HepG2 (cell line): ENCODE measurements at regions of chr2 and their contacts with region 1.

Region 1: GRCh38 chr2:68157402-68158133 is at the start of gene PNO1:
- DNase-seq: peak; percentile 95
- ATAC-seq: peak; percentile 97
- H3K4me3 ChIP-seq: peak within 1 kb of the TSS; percentile 82 to 91 (median 82)
- H3K27ac ChIP-seq: peak within 1 kb of the TSS; percentile 90
- H3K4me1 ChIP-seq: peaks cover 17% of the 10 kb centered on the region; the same call in 1 of the 2 replicates
- H3K27me3 ChIP-seq: no peaks in the 10 kb centered on the region; a peak in 1 of 5 replicates
- CTCF ChIP-seq: 0 out of 2 replicates have a peak, but pooled peaks have one; percentile 14
- EP300 ChIP-seq: peak in 1 of 2 experiments; percentile 83; a peak in 2 of 4 replicates
- POLR2A ChIP-seq: peak; percentile 71 to 84
- RAD21 ChIP-seq: no peak; the same call in 1 of the 2 replicates
- total RNA-seq, gene PNO1: 48.5 and 68.2 TPM in 2 replicates

Region 2: GRCh38 chr2:68062680-68063387 is 94.7 kb before region 1 on chr2 and contains the start of gene C1D:
- CTCF ChIA-PET with region 1: no interaction called
- POLR2A ChIA-PET with region 1: interaction called, 14 read pairs
- in situ Hi-C with region 1: no loop called
- intact Hi-C with region 1: no loop called
- DNase-seq: peak; percentile 87
- ATAC-seq: peak; percentile 94
- H3K4me3 ChIP-seq: peak within 1 kb of the TSS; percentile 79 to 100 (median 91)
- H3K27ac ChIP-seq: peak within 1 kb of the TSS; percentile 86
- H3K4me1 ChIP-seq: peaks cover 38% of the 10 kb centered on the region
- H3K27me3 ChIP-seq: no peaks in the 10 kb centered on the region; a peak in 1 of 5 replicates
- CTCF ChIP-seq: no peak
- EP300 ChIP-seq: 0 out of 4 replicates have a peak, but pooled peaks of 1 of the 2 experiments have one; percentile 23
- POLR2A ChIP-seq: peak; percentile 94 to 97
- RAD21 ChIP-seq: no peak
- total RNA-seq, gene C1D: 42.5 and 43.5 TPM in 2 replicates

Region 3: DNA sequence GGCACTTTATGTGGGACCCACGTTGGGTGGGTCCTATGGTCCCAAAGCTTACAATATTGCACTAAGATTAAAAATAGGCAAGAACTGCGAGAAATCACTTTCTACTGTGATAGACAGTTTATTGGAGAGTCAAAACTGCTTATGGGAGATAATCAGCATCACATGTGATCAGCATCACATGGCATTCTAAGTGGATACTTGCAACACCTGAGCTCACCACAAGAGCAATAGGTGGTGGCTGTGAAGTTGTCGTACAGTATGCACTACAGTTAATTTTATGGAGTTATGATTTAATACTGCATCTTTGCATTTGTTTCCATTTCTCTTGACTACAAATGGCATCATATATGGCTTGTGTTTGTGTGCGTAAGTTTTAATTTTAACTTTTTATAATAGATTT is 11.7 kb after region 1 on chr2:
- CTCF ChIA-PET with region 1: no interaction called
- POLR2A ChIA-PET with region 1: interaction called, 11 read pairs
- in situ Hi-C with region 1: no loop called
- intact Hi-C with region 1: no loop called
- DNase-seq: no peak
- ATAC-seq: peak; percentile 65
- H3K4me3 ChIP-seq: no peak overlapping the region
- H3K27ac ChIP-seq: no peak overlapping the region
- H3K4me1 ChIP-seq: peaks cover 11% of the 10 kb centered on the region
- H3K27me3 ChIP-seq: no peaks in the 10 kb centered on the region
- CTCF ChIP-seq: no peak
- EP300 ChIP-seq: no peak
- POLR2A ChIP-seq: no peak
- RAD21 ChIP-seq: no peak

Region 4: DNA sequence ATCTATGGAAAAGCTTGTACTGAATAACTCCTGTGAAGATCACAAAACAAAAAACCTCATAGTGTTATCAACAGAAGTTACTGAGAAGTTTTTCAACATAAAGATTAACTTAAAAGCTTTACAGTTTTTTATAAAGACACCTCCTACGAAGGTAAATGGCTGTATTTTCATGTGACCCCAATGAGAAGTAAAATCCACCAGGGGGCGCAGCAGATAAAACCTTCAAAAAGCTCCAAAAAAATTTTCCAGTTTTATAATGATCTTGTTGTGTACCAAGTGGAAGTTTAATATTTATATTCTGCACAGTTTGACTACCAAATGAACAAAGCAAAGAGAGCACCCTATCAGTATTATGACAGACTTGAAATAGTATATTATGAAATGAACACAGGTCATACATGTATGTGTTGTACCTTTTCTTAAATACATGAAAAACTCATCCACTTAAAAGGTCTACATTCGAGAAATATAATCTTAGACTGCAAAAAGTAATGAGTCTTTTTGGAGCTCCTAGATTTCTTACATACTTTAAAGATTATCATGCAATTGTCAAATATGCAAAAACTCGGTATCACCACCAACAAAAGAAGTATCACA is 38.6 kb after region 1 on chr2:
- CTCF ChIA-PET with region 1: no interaction called
- POLR2A ChIA-PET with region 1: no interaction called
- in situ Hi-C with region 1: no loop called
- intact Hi-C with region 1: loop called (anchors 5 kb)
- DNase-seq: peak; percentile 16
- ATAC-seq: no peak
- H3K4me3 ChIP-seq: no peak overlapping the region
- H3K27ac ChIP-seq: no peak overlapping the region
- H3K4me1 ChIP-seq: peaks cover 24% of the 10 kb centered on the region
- H3K27me3 ChIP-seq: no peaks in the 10 kb centered on the region
- CTCF ChIP-seq: no peak
- EP300 ChIP-seq: no peak
- POLR2A ChIP-seq: no peak
- RAD21 ChIP-seq: no peak

Region 5: GRCh38 chr2:68206793-68207192 is 49.2 kb after region 1 on chr2:
- CTCF ChIA-PET with region 1: no interaction called
- POLR2A ChIA-PET with region 1: no interaction called
- in situ Hi-C with region 1: no loop called
- intact Hi-C with region 1: no loop called
- DNase-seq: no peak
- ATAC-seq: no peak
- H3K4me3 ChIP-seq: no peak overlapping the region
- H3K27ac ChIP-seq: no peak overlapping the region
- H3K4me1 ChIP-seq: peaks cover 12% of the 10 kb centered on the region
- H3K27me3 ChIP-seq: no peaks in the 10 kb centered on the region
- CTCF ChIP-seq: no peak
- EP300 ChIP-seq: no peak
- POLR2A ChIP-seq: no peak
- RAD21 ChIP-seq: no peak